Body of pancreas (tissue), 4 donors: ENCODE measurements at regions of chr9 and their contacts with region 1.

Region 1: DNA sequence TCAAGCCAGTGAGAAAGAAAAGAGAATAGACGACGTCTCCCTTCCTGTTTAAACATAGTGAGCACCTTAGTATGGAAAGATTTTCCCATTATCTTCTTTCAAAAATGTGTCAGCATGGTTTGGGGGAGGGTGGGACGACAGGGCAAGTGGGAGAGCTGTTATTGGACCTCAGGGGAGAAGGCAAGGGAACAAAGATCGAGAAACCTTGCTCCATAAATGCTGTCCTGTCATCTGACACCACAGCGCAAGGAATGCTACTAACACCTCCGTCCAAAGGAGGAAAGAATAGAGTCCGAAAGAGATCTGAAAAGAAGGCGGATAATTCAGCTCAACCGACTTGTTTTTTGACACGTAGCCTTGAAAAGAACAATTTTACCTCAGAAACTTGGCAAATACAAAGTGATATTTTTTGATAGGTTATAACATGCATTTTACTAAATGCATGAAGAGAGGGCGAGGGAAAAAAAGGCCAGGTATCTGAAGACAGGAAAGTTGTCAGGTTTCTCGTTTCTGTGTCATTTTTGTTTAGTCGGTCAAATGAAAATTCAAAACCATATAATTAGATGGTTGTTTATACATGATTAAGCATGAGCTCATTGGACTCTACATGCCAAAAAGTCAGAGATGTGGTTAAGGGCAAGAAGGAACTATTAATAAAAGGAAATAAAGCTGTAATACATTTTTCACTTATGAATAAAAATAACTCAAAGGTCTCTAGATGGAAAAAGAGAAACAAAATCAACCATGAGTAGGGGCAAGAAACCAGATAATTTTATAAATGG is 155.7 kb downstream of the GLIS3 start:
- DNase-seq: no peak
- ATAC-seq: no peak
- H3K4me3 ChIP-seq: no peak overlapping the region
- H3K27ac ChIP-seq: peak overlapping the region in 3 of 4 donors; percentile 10 to 74 (median 63)
- H3K4me1 ChIP-seq: peaks cover 32% of the 10 kb centered on the region
- H3K27me3 ChIP-seq: no peaks in the 10 kb centered on the region
- CTCF ChIP-seq: no peak
- POLR2A ChIP-seq: no peak

Region 2: GRCh38 chr9:4197548-4197947 is 53.4 kb after region 1 on chr9:
- intact Hi-C with region 1: no loop called
- DNase-seq: no peak
- ATAC-seq: no peak
- H3K4me3 ChIP-seq: no peak overlapping the region
- H3K27ac ChIP-seq: no peak overlapping the region
- H3K4me1 ChIP-seq: no peaks in the 10 kb centered on the region
- H3K27me3 ChIP-seq: no peaks in the 10 kb centered on the region
- CTCF ChIP-seq: peak in 1 of 7 experiments; percentile 3
- POLR2A ChIP-seq: no peak

Region 3: GRCh38 chr9:4228606-4229005 is 84.5 kb after region 1 on chr9:
- intact Hi-C with region 1: loop called (anchors 10 kb)
- DNase-seq: no peak
- ATAC-seq: peak; percentile 63
- H3K4me3 ChIP-seq: no peak overlapping the region
- H3K27ac ChIP-seq: no peak overlapping the region
- H3K4me1 ChIP-seq: no peaks in the 10 kb centered on the region
- H3K27me3 ChIP-seq: no peaks in the 10 kb centered on the region
- CTCF ChIP-seq: peak in 6 of 7 experiments; percentile 22 to 46 (median 39)
- POLR2A ChIP-seq: no peak